GM10248 (cell line): ENCODE measurements at regions of chr6 and their contacts with region 1.

Region 1: DNA sequence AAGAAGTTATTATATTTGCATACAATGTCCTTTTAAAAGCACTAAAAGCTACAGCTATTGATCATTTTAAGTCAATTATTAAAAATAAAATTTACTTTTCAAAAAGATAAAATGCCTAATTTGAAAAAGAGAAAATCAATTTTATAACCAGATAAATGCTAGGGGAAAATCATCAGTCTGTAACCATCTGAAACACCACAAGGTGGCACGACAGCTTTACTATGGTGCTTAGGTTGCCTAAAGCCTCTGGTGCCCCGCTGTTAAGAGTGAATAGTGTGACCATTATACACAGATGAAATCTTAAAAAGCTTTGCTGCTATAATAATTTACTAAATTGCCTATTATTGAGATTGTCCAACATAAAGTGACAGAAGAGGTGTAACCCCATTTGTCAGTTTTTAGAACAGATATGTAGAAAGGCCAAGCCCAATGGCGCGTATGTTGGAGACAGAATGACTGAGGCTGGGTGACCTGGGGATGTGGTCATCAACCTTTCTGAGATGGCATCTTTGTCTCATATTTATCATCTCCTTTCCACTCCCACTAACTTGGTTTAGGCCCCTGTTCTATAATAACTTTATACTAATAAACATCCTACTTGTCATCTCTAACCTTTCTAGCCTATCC is 100.8 kb downstream of the MOXD1 start:
- DNase-seq: peak; percentile 18
- CTCF ChIP-seq: peak; percentile 57

Region 2: DNA sequence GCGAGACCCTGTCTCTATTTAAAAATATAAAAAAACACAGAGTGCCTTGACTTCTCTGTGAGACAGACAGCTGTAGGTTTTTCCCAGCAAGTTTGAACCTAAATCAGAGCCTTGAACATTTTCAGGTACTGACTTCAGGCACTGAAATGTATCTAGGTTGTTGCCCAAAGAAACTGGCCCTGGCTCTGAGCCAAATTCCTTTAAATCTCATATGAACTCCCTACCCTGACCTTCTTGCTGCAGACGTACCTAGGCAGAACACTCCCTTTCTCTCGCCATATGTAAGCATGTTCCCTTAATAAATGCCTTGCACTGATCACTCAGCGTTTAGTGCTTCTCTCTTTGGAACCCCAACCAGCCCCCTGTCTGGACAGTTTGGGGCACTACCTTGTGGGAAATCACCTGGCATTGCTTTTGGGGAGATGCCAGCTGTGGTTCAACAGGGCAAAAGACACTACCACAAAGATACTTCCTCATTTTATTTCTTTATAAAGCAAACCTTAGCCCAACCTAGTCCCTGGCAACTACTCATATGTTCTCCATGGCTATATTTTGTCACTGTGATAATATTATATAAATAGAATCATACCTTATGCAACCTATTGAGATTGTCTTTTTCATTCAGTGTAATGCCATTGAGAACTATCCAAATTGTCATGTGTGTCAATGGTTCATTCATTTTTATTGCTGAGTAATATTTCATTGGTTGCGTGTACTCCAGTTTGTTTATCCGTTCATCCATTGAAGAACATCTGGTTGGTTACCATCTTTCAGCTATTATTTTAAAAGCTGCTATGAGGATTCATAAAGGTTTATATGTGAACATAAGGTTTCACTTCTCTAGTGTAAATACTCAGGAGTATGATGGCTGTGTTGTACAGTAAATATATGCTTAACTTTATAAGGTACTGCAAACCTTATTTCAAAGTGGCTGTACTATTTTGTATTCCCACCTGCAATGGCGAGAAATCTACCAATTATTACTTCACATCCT is 14.1 kb before region 1 on chr6:
- CTCF ChIA-PET with region 1: interaction called, 154 read pairs
- POLR2A ChIA-PET with region 1: no interaction called
- DNase-seq: no peak
- CTCF ChIP-seq: no peak

Region 3: DNA sequence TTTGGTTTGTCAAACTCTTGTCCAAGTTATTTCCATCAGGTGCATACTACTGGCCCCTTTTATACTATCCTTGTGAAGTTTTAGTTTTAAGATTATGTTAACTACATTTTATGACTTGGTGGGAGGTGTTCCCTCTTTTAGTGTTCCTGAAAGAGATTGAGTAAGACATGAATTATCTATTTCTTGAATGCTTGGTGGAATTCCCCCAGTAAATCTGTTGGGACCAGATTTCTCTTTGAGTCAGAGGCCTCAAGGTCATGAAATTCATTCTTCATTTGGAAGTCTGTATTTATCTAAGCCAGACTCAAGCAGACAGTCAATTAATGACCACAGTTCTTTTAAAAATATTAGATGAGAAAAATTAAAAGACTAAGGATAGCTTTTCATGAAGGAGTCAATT is 19.6 kb after region 1 on chr6:
- CTCF ChIA-PET with region 1: interaction called, 11 read pairs
- POLR2A ChIA-PET with region 1: no interaction called
- DNase-seq: no peak
- CTCF ChIP-seq: no peak

Region 4: GRCh38 chr6:132456700-132457143 is 156.3 kb after region 1 on chr6:
- CTCF ChIA-PET with region 1: interaction called, 33 read pairs
- POLR2A ChIA-PET with region 1: no interaction called
- DNase-seq: peak; percentile 65
- CTCF ChIP-seq: peak; percentile 74

Region 5: DNA sequence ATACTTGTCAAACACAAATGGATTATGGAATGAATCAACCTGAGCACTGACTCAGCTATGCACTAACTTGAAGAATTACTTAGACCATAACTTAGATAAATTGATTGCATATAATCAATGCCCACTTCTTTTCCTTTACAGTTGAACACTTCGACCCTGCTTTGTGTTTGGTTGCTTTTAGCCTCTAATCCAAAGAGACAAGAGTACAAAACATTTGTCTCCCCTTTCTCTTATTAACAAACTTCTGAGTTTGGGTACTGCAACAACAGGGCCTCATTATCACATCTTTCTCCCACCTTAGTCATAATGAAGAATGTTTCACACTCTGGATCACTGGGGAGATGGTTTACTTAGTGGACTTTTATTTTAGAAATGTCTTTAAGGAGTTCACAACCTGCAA is 267.1 kb after region 1 on chr6:
- CTCF ChIA-PET with region 1: no interaction called
- POLR2A ChIA-PET with region 1: no interaction called
- DNase-seq: no peak
- CTCF ChIP-seq: no peak

Region 6: DNA sequence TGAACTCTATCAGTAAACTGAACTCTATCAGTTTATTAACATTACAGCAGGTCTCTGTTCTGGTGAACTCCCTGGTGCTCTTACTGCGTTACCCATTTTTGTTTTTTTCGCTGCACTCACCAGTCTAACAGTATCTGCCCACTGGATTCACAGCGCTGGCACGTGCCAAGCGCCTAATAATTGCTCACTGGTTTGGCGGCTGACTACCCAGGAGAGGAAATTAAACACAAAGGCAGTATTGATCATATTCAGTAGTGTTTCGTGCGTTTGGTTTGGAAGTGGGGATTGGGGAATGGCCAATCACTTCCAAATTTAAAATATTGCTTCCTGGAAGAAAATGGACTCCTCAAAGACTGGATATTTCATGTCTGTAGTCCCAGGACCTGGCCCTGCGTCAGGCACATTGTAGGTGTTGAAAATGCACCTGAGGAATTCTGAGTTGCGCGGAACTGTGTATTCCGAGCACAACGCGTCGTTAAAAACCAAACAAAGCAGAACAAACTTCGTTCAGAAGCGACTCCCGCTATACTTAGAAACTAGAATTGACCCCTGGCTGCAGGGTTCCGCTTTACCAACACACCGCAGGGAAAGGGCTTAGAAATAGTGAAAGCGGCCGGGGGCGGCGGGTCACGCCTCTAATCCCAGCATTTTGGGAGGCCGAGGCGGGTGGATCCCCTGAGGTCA is 512.9 kb after region 1 on chr6:
- CTCF ChIA-PET with region 1: no interaction called
- POLR2A ChIA-PET with region 1: no interaction called
- DNase-seq: peak; percentile 43
- CTCF ChIP-seq: no peak